ENCODE measurements at regions of chr17 and their contacts with region 1.

Region 1: GRCh38 chr17:43945074-43945829 is 3.0 kb upstream of the PPY start:
- DNase-seq: no peak
- H3K4me3 ChIP-seq: no peak overlapping the region
- H3K4me3 Mint-ChIP-seq: no peak overlapping the region
- H3K27ac ChIP-seq: no peak overlapping the region
- H3K27ac Mint-ChIP-seq: no peak overlapping the region
- H3K4me1 ChIP-seq: no peaks in the 10 kb centered on the region
- H3K4me1 Mint-ChIP-seq: no peaks in the 10 kb centered on the region
- H3K27me3 ChIP-seq: peaks cover 5% of the 10 kb centered on the region
- H3K27me3 Mint-ChIP-seq: peaks cover 8 to 27% of the 10 kb centered on the region in 2 donors

Region 2: GRCh38 chr17:43927060-43927864 is 18.0 kb before region 1 on chr17:
- CTCF ChIA-PET with region 1: interaction called, 15 read pairs
- POLR2A ChIA-PET with region 1: no interaction called
- DNase-seq: peak in 1 of 5 donors; percentile 50
- H3K4me3 ChIP-seq: peak overlapping the region; percentile 67
- H3K4me3 Mint-ChIP-seq: peak overlapping the region; percentile 81 to 94 (median 89)
- H3K27ac ChIP-seq: no peak overlapping the region
- H3K27ac Mint-ChIP-seq: peak overlapping the region; percentile 43 to 94 (median 80)
- H3K4me1 ChIP-seq: peaks cover 23% of the 10 kb centered on the region
- H3K4me1 Mint-ChIP-seq: peaks cover 17 to 20% (median 19%) of the 10 kb centered on the region in 3 donors
- H3K27me3 ChIP-seq: no peaks in the 10 kb centered on the region
- H3K27me3 Mint-ChIP-seq: peaks cover 12 to 13% of the 10 kb centered on the region in 2 donors

Region 3: DNA sequence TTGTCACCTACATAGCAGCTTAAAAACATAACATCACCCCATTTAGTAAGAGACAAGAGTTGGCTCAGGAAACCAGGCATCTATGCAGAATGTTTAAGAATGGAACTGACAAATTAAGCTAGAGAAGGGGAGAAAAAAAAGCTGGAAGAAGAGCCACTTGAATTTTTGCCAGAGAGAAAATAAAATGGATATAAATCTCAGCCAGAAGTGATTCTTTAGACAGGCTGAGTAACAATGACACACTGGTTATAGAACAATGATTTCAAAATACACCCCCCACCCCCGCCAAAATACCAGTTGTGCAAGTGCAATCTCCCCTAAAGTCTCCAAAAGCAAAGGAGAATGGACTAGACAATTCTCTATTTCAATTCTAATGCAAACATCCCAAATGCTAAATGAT is 98.8 kb after region 1 on chr17:
- CTCF ChIA-PET with region 1: interaction called, 40 read pairs
- POLR2A ChIA-PET with region 1: no interaction called
- DNase-seq: no peak
- H3K4me3 ChIP-seq: no peak overlapping the region
- H3K4me3 Mint-ChIP-seq: no peak overlapping the region
- H3K27ac ChIP-seq: no peak overlapping the region
- H3K27ac Mint-ChIP-seq: no peak overlapping the region
- H3K4me1 ChIP-seq: no peaks in the 10 kb centered on the region
- H3K4me1 Mint-ChIP-seq: peaks cover 11 to 32% (median 27%) of the 10 kb centered on the region in 3 donors
- H3K27me3 ChIP-seq: no peaks in the 10 kb centered on the region
- H3K27me3 Mint-ChIP-seq: no peaks in the 10 kb centered on the region

Measured in CD8-positive, alpha-beta memory T cell (primary cell).